ENCODE measurements at regions of chr16 and their contacts with region 1.

Region 1: DNA sequence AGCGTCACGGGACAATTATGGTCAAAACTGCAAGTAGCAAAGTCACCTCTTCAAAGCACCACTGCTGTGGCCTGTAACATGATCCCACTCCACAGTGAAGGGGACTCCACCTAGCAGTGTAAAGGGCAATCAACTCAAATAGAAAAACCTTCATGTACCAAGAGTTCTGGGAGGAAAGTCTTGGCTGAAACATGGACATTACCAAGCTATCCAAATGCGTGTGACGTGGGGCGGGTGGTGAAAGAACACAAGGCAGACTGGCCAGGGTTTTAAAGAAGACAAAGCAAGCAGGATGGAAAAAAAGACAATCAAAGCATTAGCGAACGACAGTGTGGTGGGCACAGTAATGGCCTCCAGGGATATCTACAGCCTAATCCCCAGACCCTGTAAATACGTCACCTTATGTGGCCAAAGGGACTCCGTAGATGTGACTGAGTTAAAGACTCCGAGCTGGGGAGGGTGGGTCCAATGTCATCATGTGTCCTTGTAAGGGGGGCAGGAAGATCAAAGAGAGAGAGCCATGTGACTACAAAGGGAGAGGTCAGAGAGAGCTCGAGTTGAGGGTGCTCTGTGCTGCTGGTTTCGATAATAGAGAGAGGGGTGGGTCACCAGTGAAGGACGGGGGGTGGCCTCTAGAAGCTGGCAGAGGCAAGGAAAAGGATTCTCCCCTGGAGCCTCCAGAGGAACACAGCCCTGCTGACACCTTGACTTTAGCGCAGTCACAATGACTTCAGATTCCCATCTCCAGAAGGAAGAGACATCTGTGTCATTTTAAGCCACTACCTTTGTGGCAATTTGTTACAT is 6.0 kb downstream of the HSDL1 start:
- DNase-seq: peak in 2 of 5 donors; percentile 46 to 68
- ATAC-seq: peak; percentile 84 to 91 (median 90)
- H3K4me3 ChIP-seq: peak overlapping the region in 3 of 12 donors; percentile 9 to 23 (median 12)
- H3K27ac ChIP-seq: peak overlapping the region in 11 of 12 donors; percentile 47 to 86 (median 73)
- H3K4me1 ChIP-seq: peaks cover 0 to 37% (median 7%) of the 10 kb centered on the region in 12 donors
- H3K27me3 ChIP-seq: no peaks in the 10 kb centered on the region
- CTCF ChIP-seq: no peak
- POLR2A ChIP-seq: no peak

Region 2: DNA sequence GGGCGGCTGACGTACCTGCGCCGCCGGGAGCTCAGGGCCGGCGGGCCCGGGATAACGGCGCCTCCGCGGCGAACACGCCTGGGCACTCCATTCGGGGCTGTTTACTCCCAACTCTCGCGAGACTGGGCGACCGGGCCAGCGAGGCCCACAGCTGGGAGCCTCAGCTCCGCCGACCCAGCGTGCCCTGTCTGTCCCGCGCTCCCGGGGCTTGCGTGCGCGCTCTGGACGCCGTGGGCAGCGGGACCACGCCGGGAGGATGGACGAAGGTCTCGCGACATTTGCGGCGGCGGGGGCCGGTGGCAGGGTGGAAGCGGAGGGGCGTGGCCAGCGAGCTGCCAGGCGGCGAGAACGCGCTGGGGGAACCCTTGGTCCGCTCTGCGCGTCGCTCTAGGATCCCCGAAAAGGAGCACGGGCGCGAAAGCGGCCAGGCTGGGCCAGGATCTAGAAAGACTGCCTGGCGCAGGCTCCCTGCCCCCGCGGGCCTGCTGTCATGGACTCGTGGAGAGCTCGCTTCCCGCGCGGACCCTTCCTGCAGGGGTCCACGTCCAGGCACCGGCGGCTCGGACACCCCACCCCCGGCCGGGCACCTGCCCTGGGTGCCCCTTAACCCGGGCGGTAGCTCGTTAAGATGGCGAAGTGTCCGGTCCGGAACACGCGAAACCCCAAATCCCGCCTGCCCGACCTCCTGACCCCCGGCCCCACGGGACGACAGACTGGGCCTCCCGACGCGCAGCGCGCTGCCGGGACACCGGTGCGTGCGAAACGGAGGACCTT is 22.1 kb before region 1 on chr16 and contains the start of gene MBTPS1:
- intact Hi-C with region 1: loop called in 2 of 10 experiments (anchors 2 kb)
- DNase-seq: peak; percentile 99 to 100 (median 99)
- ATAC-seq: peak; percentile 97 to 99 (median 98)
- H3K4me3 ChIP-seq: peak within 1 kb of the TSS; percentile 49 to 100 (median 84)
- H3K27ac ChIP-seq: peak within 1 kb of the TSS; percentile 80 to 99 (median 92)
- H3K4me1 ChIP-seq: peaks cover 0 to 29% (median 19%) of the 10 kb centered on the region in 12 donors
- H3K27me3 ChIP-seq: no peaks in the 10 kb centered on the region
- CTCF ChIP-seq: peak in 2 of 12 donors; percentile 1 to 4
- POLR2A ChIP-seq: peak in 1 of 2 donors; percentile 91
- total RNA-seq, gene MBTPS1: 57.3 to 91.4 (median 68.6) TPM